GM12878 (cell line): ENCODE measurements at regions of chr4 and their contacts with region 1.

Region 1: DNA sequence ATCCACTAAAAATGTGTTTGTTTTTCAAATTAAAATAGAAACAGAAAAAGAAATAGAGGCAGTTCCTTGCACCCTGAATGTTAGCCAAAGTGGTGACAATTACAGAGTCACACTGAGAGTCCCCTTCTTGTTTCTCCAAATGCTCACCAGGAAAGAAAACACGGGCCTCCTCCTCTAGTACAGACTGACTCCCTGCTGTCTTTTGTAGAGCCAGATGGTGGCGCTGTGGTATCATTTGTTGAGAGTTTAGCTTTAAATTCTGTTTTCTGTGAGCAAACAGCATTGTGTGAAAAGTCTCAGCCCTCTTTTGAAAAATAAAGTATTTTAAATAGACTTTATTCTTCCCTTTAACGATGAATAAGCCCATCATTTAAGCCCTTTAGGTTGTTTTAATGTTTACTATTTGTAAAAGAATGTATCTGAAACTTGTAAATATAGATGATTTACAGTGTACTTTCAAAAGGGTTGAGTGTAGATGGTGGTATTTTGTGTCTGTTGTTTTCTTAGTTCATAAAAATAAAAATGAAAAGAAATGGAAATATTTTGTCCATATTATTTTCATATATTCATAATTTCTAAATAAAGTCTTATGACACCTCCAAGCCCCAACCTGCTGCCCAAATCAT is 36.9 kb upstream of the ATOH1 start:
- DNase-seq: no peak
- ATAC-seq: peak; percentile 91
- H3K4me3 ChIP-seq: no peak overlapping the region
- H3K27ac ChIP-seq: no peak overlapping the region
- H3K4me1 ChIP-seq: no peaks in the 10 kb centered on the region
- H3K27me3 ChIP-seq: no peaks in the 10 kb centered on the region
- CTCF ChIP-seq: peak; percentile 72 to 87 (median 84)
- EP300 ChIP-seq: no peak
- POLR2A ChIP-seq: no peak
- RAD21 ChIP-seq: peak; percentile 96

Region 2: DNA sequence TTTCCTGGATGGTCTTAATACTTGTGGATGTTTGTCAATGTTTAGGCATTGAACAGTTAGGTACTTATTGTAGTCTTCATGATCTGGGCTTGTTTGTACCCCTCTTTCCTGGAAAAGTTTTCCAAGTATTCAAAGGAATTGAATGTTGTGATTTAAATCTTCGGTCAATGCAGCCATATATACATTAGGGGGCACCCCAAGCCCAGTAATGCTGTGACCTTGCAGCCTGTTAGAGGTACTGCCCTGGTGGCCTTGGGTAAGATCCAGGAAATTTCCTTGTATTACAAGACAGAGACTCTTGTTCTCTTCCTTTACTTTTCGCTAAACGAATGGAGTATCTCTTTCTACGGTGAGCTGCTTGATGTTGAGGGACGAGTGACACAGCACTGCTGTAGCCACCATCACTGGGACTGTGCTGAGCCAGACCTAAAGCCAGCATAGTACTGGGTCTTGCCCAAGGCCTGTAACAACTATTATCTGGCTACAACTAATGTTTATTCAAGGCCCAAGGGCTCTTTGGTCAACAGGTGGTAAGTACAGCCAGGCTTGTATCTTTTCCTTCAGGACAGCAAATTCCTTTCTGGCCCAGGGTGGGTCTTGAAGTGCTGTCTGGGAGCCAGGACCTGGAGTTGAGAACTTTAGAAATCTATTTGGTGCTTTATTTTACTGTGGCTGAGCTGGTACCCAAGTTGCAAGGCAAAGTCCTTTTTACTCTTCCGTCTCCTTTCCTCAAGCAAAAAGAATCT is 81.4 kb before region 1 on chr4:
- CTCF ChIA-PET with region 1: interaction called, 11 read pairs
- POLR2A ChIA-PET with region 1: no interaction called
- RAD21 ChIA-PET with region 1: interaction called, 6 read pairs
- SMC1A ChIA-PET with region 1: interaction called, 3 read pairs
- in situ Hi-C with region 1: no loop called
- intact Hi-C with region 1: loop called (anchors 2 kb)
- DNase-seq: peak; percentile 4
- ATAC-seq: peak; percentile 94
- H3K4me3 ChIP-seq: no peak overlapping the region
- H3K27ac ChIP-seq: no peak overlapping the region
- H3K4me1 ChIP-seq: no peaks in the 10 kb centered on the region
- H3K27me3 ChIP-seq: no peaks in the 10 kb centered on the region
- CTCF ChIP-seq: peak; percentile 49 to 73 (median 55); a peak in 5 of 6 replicates
- EP300 ChIP-seq: no peak
- POLR2A ChIP-seq: no peak
- RAD21 ChIP-seq: peak; percentile 99

Region 3: GRCh38 chr4:93912146-93912545 is 120.5 kb after region 1 on chr4:
- CTCF ChIA-PET with region 1: no interaction called
- POLR2A ChIA-PET with region 1: no interaction called
- RAD21 ChIA-PET with region 1: no interaction called
- SMC1A ChIA-PET with region 1: no interaction called
- in situ Hi-C with region 1: no loop called
- intact Hi-C with region 1: no loop called
- DNase-seq: no peak
- ATAC-seq: no peak
- H3K4me3 ChIP-seq: no peak overlapping the region
- H3K27ac ChIP-seq: no peak overlapping the region
- H3K4me1 ChIP-seq: no peaks in the 10 kb centered on the region
- H3K27me3 ChIP-seq: no peaks in the 10 kb centered on the region
- CTCF ChIP-seq: no peak
- EP300 ChIP-seq: no peak
- POLR2A ChIP-seq: no peak
- RAD21 ChIP-seq: no peak

Region 4: DNA sequence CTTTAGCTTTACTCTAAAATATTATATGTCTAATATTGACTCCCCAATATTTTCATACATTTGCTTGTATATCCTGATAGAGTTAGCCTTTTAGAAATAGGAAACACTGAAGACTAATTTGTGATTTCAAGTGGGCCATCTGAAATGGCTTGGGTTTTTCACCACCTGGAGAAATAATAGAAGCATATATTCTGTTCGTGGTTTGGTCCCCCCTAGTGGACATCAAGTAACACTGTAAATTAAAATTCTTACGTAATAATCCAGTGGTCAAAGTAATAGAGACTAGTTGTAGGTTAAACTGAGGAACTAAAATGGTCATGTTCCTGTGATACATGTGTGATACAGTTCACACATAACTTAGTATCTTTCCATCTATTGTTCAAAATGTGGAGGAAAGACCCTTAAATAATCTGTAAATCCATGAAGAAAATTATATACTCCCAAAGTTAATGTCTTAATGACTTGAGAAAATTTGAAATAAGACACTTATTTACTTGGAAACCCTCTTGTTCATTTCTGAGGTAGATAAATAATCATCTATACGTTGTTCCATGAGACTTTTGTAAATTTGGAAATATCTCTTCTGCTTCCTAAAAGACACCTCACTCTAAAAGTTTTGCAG is 336.1 kb after region 1 on chr4:
- CTCF ChIA-PET with region 1: interaction called, 6 read pairs
- POLR2A ChIA-PET with region 1: no interaction called
- RAD21 ChIA-PET with region 1: no interaction called
- SMC1A ChIA-PET with region 1: no interaction called
- in situ Hi-C with region 1: loop called (anchors 25 kb)
- intact Hi-C with region 1: loop called (anchors 1 kb)
- DNase-seq: no peak
- ATAC-seq: peak; percentile 76
- H3K4me3 ChIP-seq: no peak overlapping the region
- H3K27ac ChIP-seq: no peak overlapping the region
- H3K4me1 ChIP-seq: no peaks in the 10 kb centered on the region
- H3K27me3 ChIP-seq: no peaks in the 10 kb centered on the region
- CTCF ChIP-seq: peak; percentile 41 to 49 (median 48); a peak in 5 of 6 replicates
- EP300 ChIP-seq: no peak
- POLR2A ChIP-seq: no peak
- RAD21 ChIP-seq: peak; percentile 58

Region 5: DNA sequence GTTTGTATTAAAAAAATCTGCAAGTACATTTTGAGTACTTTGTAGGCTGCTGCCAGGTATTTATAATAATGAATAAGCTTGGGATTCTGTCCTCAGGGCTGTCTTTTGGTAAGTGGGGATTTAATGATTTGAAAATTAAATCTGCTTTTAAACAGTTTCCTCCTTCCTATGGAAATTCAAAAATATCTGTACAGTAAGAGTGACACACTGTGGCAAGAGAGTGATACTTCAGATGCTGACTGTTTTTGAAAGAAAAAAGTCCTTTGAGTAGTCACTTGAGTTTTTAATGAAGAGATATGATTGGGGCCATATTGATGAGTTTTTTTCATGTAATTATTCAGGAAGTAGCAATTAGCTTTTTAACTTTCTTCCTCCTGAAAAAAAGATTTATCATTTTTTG is 465.1 kb after region 1 on chr4:
- CTCF ChIA-PET with region 1: no interaction called
- POLR2A ChIA-PET with region 1: no interaction called
- RAD21 ChIA-PET with region 1: no interaction called
- SMC1A ChIA-PET with region 1: no interaction called
- in situ Hi-C with region 1: no loop called
- intact Hi-C with region 1: loop called (anchors 2 kb)
- DNase-seq: no peak
- ATAC-seq: peak; percentile 47; the same call in 2 of the 3 replicates
- H3K4me3 ChIP-seq: no peak overlapping the region
- H3K27ac ChIP-seq: no peak overlapping the region
- H3K4me1 ChIP-seq: no peaks in the 10 kb centered on the region
- H3K27me3 ChIP-seq: no peaks in the 10 kb centered on the region
- CTCF ChIP-seq: peak in 2 of 3 experiments; percentile 20 to 23; a peak in 1 of 6 replicates
- EP300 ChIP-seq: no peak
- POLR2A ChIP-seq: no peak
- RAD21 ChIP-seq: peak; percentile 28; the same call in 1 of the 2 replicates

Region 6: GRCh38 chr4:94304365-94304971 is 512.8 kb after region 1 on chr4:
- CTCF ChIA-PET with region 1: no interaction called
- POLR2A ChIA-PET with region 1: no interaction called
- RAD21 ChIA-PET with region 1: no interaction called
- SMC1A ChIA-PET with region 1: no interaction called
- in situ Hi-C with region 1: no loop called
- intact Hi-C with region 1: loop called (anchors 5 kb)
- DNase-seq: no peak
- ATAC-seq: peak; percentile 83
- H3K4me3 ChIP-seq: no peak overlapping the region
- H3K27ac ChIP-seq: no peak overlapping the region
- H3K4me1 ChIP-seq: no peaks in the 10 kb centered on the region
- H3K27me3 ChIP-seq: no peaks in the 10 kb centered on the region
- CTCF ChIP-seq: peak; percentile 43 to 58 (median 51); a peak in 4 of 6 replicates
- EP300 ChIP-seq: no peak
- POLR2A ChIP-seq: no peak
- RAD21 ChIP-seq: peak; percentile 69

Region 7: DNA sequence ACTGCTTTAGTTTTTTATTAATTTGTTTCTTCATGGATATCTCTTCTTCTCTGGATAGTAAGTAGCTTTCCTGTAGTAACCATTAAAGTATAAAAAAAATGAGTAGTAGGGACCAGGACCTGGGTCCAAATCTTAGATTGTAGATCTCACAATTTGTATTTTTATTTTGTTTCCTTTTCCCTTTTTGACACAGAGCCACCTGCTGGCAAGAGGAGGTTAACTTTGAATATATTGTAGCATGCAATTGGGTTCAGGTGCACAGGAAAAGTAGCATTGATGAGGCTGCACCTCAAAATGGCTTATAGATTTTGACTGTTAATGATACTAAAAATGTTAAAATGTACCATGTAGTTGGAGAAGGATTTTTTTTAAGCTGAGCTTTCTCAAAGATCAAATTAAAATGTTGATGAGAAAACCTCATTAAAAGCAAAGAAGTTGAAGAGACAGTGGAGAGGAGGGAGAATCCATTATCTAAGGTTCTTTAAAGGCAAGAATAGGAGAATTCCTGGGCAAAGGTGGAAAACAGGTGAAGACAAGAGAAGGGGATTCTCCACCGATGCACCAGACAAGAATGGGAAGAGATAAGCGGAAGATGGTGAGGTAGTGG is 599.2 kb after region 1 on chr4:
- CTCF ChIA-PET with region 1: interaction called, 5 read pairs
- POLR2A ChIA-PET with region 1: no interaction called
- RAD21 ChIA-PET with region 1: no interaction called
- SMC1A ChIA-PET with region 1: interaction called, 3 read pairs
- in situ Hi-C with region 1: loop called (anchors 5 kb)
- intact Hi-C with region 1: loop called (anchors 1 kb)
- DNase-seq: no peak
- ATAC-seq: peak; percentile 67
- H3K4me3 ChIP-seq: no peak overlapping the region
- H3K27ac ChIP-seq: no peak overlapping the region
- H3K4me1 ChIP-seq: no peaks in the 10 kb centered on the region
- H3K27me3 ChIP-seq: peaks cover 0 to 2% of the 10 kb centered on the region in 2 experiments; a peak in 1 of 4 replicates
- CTCF ChIP-seq: peak; percentile 46 to 53 (median 47); a peak in 4 of 6 replicates
- EP300 ChIP-seq: no peak
- POLR2A ChIP-seq: no peak
- RAD21 ChIP-seq: peak; percentile 49

Region 8: DNA sequence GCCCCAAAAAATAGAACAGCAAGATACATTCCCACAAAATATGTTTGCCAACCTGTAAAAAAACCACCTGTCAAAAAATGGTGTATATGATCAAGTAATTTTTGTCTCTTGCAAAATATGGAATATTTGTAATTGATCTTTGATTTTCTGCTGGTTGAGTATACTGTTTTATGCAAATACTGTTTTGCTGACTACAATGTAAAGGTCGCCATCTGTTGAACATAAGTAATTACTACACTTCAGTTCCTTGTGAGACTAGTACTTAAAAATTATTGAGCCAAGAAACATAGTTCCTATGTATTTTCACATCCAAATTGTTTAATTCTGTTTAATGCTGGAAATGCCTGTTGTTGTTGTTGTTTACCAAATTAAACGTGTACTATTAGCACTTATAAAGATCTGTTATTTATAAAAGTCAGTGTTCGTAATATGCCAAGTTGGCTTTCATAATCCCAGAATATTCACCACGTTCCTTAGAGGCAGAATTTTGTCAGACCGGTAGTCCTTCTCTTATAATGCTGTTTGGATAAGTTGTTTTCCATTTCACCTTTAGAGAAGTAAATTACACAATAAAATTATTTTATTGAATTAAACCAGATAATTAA is 804.3 kb after region 1 on chr4:
- CTCF ChIA-PET with region 1: no interaction called
- POLR2A ChIA-PET with region 1: no interaction called
- RAD21 ChIA-PET with region 1: no interaction called
- SMC1A ChIA-PET with region 1: no interaction called
- in situ Hi-C with region 1: no loop called
- intact Hi-C with region 1: loop called (anchors 10 kb)
- DNase-seq: peak; percentile 8
- ATAC-seq: peak; percentile 78
- H3K4me3 ChIP-seq: no peak overlapping the region
- H3K27ac ChIP-seq: no peak overlapping the region
- H3K4me1 ChIP-seq: no peaks in the 10 kb centered on the region
- H3K27me3 ChIP-seq: no peaks in the 10 kb centered on the region
- CTCF ChIP-seq: peak; percentile 45 to 76 (median 53); a peak in 4 of 6 replicates
- EP300 ChIP-seq: no peak
- POLR2A ChIP-seq: no peak
- RAD21 ChIP-seq: peak; percentile 89